Gastrocnemius medialis (tissue), 4 donors: ENCODE measurements at regions of chr5 and their contacts with region 1.

Region 1: DNA sequence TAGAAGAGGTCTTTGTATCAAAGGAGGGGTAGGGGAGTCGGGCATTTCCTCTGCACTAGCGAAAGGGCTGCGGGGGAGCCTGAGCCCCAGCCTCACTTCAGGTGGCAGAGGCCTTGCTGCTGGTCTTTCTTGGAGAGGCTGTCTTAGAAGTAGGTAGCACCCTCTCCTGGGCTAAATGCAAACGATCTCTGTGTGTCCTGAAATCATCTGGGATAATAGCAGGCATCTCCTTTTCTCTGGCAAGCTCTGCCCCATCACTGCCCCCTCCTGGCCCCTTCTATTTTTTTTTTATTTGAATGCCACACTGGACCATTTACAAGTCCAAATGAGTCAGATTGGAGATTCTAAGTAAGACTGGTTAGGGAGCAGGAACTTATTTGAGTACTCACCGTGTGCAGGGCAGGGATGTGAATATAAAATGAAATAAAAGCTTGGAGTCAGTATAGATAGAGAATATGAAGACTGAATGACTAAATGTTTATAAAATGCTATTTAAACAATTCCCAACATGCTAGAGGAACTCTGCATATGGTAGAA is 137.1 kb downstream of the FGF1 start:
- DNase-seq: peak in 1 of 2 donors; percentile 40
- ATAC-seq: peak; percentile 84 to 86
- H3K4me3 ChIP-seq: no peak overlapping the region
- H3K27ac ChIP-seq: no peak overlapping the region
- H3K4me1 ChIP-seq: peaks cover 0 to 8% of the 10 kb centered on the region in 2 donors
- H3K27me3 ChIP-seq: peaks cover 3 to 13% (median 7%) of the 10 kb centered on the region in 3 donors
- CTCF ChIP-seq: peak; percentile 36 to 65 (median 51)
- POLR2A ChIP-seq: no peak

Region 2: GRCh38 chr5:141992349-141992963 is 556.4 kb before region 1 on chr5:
- in situ Hi-C with region 1: loop called in 1 of 4 experiments (anchors 25 kb)
- intact Hi-C with region 1: no loop called
- DNase-seq: peak; percentile 36 to 65
- ATAC-seq: peak; percentile 83 to 86
- H3K4me3 ChIP-seq: no peak overlapping the region
- H3K27ac ChIP-seq: peak overlapping the region in 1 of 4 donors; percentile 18
- H3K4me1 ChIP-seq: peaks cover 0 to 5% of the 10 kb centered on the region in 2 donors
- H3K27me3 ChIP-seq: no peaks in the 10 kb centered on the region
- CTCF ChIP-seq: peak; percentile 58 to 84 (median 71)
- POLR2A ChIP-seq: no peak

Region 3: GRCh38 chr5:142151436-142152383 is 397.1 kb before region 1 on chr5:
- in situ Hi-C with region 1: loop called in 3 of 4 experiments (anchors 10 to 25 kb)
- intact Hi-C with region 1: loop called (anchors 2 kb)
- DNase-seq: no peak
- ATAC-seq: no peak
- H3K4me3 ChIP-seq: no peak overlapping the region
- H3K27ac ChIP-seq: no peak overlapping the region
- H3K4me1 ChIP-seq: no peaks in the 10 kb centered on the region
- H3K27me3 ChIP-seq: no peaks in the 10 kb centered on the region
- CTCF ChIP-seq: peak; percentile 59 to 85 (median 64)
- POLR2A ChIP-seq: no peak

Region 4: DNA sequence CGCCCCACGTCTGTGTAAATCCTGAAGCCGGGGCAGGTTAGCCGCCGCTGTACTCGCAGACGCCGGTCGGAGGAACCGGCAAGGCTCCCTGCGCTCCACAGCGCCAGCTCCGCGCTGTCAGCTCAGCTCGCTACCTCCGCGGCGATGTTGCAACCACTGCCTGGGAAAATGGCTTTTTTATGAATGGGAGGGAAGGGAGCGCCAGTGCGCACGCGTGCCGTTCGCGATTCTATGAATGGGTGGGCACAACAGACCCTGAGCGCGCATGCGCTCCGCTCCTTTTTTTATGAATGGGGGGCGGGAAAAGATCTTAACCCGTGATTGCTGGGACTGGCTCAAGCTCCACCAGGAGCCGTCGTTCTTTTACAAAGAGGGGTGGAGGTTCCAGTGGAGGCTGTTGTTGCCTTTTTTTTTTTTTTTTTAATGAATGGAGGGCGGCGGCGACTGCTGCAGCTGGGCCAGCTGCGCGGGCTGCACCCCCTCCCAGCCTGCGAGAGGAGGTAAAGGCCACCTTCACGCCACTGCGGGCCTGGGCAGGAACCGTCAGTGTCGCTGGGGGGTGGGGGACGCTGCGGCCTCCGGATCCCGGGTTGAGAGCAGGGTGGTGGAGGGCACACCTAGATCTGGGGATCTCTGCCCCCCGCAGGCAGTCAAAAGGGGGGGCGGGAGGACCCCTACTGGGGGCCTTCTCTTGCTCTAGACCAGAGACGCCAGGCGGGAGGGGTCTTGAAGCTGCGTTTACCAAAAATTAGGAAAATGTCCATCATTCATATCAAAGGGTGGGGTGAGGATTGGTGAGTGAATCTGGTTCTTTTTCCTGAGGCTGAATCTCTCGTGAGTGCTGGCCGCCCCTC is 223.7 kb before region 1 on chr5 and contains the start of gene SPRY4:
- in situ Hi-C with region 1: no loop called
- intact Hi-C with region 1: loop called (anchors 5 kb)
- DNase-seq: peak; percentile 71 to 79
- ATAC-seq: peak; percentile 72 to 74
- H3K4me3 ChIP-seq: peak within 1 kb of the TSS; percentile 64 to 75 (median 70)
- H3K27ac ChIP-seq: peak within 1 kb of the TSS; percentile 70 to 78 (median 77)
- H3K4me1 ChIP-seq: peaks cover 23 to 33% of the 10 kb centered on the region in 2 donors
- H3K27me3 ChIP-seq: peaks cover 19 to 32% (median 27%) of the 10 kb centered on the region in 3 donors
- CTCF ChIP-seq: peak in 1 of 5 experiments; percentile 2
- POLR2A ChIP-seq: peak; percentile 63 to 82
- total RNA-seq, gene SPRY4: 4.3 to 6.9 (median 5.9) TPM

Region 5: DNA sequence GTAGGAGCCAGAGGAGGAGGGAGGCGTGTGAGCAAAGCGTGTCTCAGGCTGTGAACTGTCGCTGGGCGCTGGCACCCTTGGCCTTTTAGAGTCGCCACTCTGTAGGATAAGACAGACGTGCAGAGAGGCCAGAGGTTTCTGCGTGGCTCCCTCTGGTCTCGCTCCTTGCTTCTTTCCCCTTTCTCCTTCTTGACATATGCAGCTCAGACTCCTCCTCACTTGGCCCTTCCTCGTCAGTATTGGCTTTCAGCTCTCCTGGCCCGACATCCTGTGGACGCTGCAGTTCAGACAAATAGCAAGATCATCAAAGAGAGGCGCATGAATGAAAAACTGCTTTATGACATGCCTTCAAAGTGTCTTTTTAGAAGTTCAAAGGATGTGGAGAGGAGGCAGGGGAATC is 107.2 kb before region 1 on chr5:
- in situ Hi-C with region 1: no loop called
- intact Hi-C with region 1: loop called (anchors 5 kb)
- DNase-seq: peak in 1 of 2 donors; percentile 30
- ATAC-seq: no peak
- H3K4me3 ChIP-seq: no peak overlapping the region
- H3K27ac ChIP-seq: peak overlapping the region in 1 of 4 donors; percentile 33
- H3K4me1 ChIP-seq: no peaks in the 10 kb centered on the region
- H3K27me3 ChIP-seq: no peaks in the 10 kb centered on the region
- CTCF ChIP-seq: no peak
- POLR2A ChIP-seq: no peak

Region 6: GRCh38 chr5:142597546-142598341 is 48.9 kb after region 1 on chr5:
- in situ Hi-C with region 1: no loop called
- intact Hi-C with region 1: no loop called
- DNase-seq: no peak
- ATAC-seq: no peak
- H3K4me3 ChIP-seq: no peak overlapping the region
- H3K27ac ChIP-seq: no peak overlapping the region
- H3K4me1 ChIP-seq: peaks cover 4 to 14% of the 10 kb centered on the region in 2 donors
- H3K27me3 ChIP-seq: no peaks in the 10 kb centered on the region
- CTCF ChIP-seq: no peak
- POLR2A ChIP-seq: no peak

Region 7: DNA sequence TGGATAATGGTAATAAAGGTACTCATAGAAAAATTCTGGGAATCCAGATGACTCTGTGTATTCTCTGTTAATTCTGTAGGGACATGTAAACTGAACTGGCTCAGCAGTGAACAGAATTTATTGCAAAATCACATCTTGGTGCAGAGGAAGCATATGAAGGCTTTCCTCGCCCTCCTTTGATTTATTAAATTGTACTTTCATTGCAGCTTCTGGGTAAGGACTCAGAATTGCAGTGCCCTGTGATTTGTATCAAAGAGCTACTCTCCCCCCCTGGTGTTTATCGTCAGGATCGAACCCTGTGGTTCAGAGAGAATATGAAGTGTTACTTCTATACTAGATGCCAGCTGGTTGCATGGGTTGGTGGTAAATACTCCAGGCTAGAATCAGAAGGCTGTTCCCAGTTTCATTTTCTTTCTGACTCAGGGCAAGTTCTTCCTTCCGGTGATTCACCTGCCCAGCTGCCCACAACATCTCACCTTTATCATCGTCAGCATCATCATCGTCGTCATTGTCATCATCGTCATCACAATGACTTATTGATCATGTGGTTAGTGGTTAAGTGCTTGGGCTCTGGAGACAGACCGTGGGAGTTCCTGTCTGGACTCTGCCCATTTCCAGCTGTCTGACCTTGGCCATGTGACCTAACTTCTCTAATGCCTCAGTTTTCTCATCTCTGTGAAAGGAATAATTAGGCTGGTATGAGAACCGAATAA is 460.2 kb after region 1 on chr5:
- in situ Hi-C with region 1: no loop called
- intact Hi-C with region 1: no loop called
- DNase-seq: no peak
- ATAC-seq: peak; percentile 28 to 35
- H3K4me3 ChIP-seq: no peak overlapping the region
- H3K27ac ChIP-seq: peak overlapping the region in 2 of 4 donors; percentile 8 to 19
- H3K4me1 ChIP-seq: peaks cover 22 to 30% of the 10 kb centered on the region in 2 donors
- H3K27me3 ChIP-seq: no peaks in the 10 kb centered on the region
- CTCF ChIP-seq: no peak
- POLR2A ChIP-seq: no peak